ENCODE measurements at regions of chr1 and their contacts with region 1.

Region 1: GRCh38 chr1:95309031-95309471 is 75.0 kb downstream of the RWDD3 start:
- DNase-seq: peak; percentile 32
- ATAC-seq: peak; percentile 86
- H3K4me3 ChIP-seq: no peak overlapping the region
- H3K27ac ChIP-seq: no peak overlapping the region
- H3K4me1 ChIP-seq: no peaks in the 10 kb centered on the region
- H3K27me3 ChIP-seq: no peaks in the 10 kb centered on the region
- CTCF ChIP-seq: peak; percentile 60
- EP300 ChIP-seq: no peak
- POLR2A ChIP-seq: no peak
- RAD21 ChIP-seq: no peak

Region 2: GRCh38 chr1:95467036-95467435 is 158.0 kb after region 1 on chr1:
- CTCF ChIA-PET with region 1: no interaction called
- POLR2A ChIA-PET with region 1: no interaction called
- in situ Hi-C with region 1: no loop called
- intact Hi-C with region 1: loop called (anchors 2 kb)
- DNase-seq: no peak
- ATAC-seq: no peak
- H3K4me3 ChIP-seq: no peak overlapping the region
- H3K27ac ChIP-seq: no peak overlapping the region
- H3K4me1 ChIP-seq: no peaks in the 10 kb centered on the region
- H3K27me3 ChIP-seq: no peaks in the 10 kb centered on the region
- CTCF ChIP-seq: 0 out of 2 replicates have a peak, but pooled peaks have one; percentile 6
- EP300 ChIP-seq: no peak
- POLR2A ChIP-seq: no peak
- RAD21 ChIP-seq: no peak

Region 3: GRCh38 chr1:95532335-95532734 is 223.3 kb after region 1 on chr1:
- CTCF ChIA-PET with region 1: no interaction called
- POLR2A ChIA-PET with region 1: no interaction called
- in situ Hi-C with region 1: no loop called
- intact Hi-C with region 1: loop called (anchors 1 kb)
- DNase-seq: no peak
- ATAC-seq: peak; percentile 60
- H3K4me3 ChIP-seq: no peak overlapping the region
- H3K27ac ChIP-seq: no peak overlapping the region
- H3K4me1 ChIP-seq: no peaks in the 10 kb centered on the region
- H3K27me3 ChIP-seq: no peaks in the 10 kb centered on the region; a peak in 1 of 5 replicates
- CTCF ChIP-seq: peak; percentile 50
- EP300 ChIP-seq: no peak
- POLR2A ChIP-seq: no peak
- RAD21 ChIP-seq: no peak